Aorta (tissue), 5 donors: ENCODE measurements at regions of chr2 and their contacts with region 1.

Region 1: GRCh38 chr2:95314964-95315611 is 17.9 kb downstream of the KCNIP3 start:
- DNase-seq: peak in 1 of 2 donors; percentile 30
- ATAC-seq: no peak
- H3K4me3 ChIP-seq: no peak overlapping the region
- H3K27ac ChIP-seq: no peak overlapping the region
- H3K4me1 ChIP-seq: no peaks in the 10 kb centered on the region
- H3K27me3 ChIP-seq: no peaks in the 10 kb centered on the region

Region 2: GRCh38 chr2:95185197-95185596 is 129.9 kb before region 1 on chr2:
- intact Hi-C with region 1: loop called in 1 of 2 experiments (anchors 10 kb)
- DNase-seq: no peak
- ATAC-seq: no peak
- H3K4me3 ChIP-seq: no peak overlapping the region
- H3K27ac ChIP-seq: no peak overlapping the region
- H3K4me1 ChIP-seq: no peaks in the 10 kb centered on the region
- H3K27me3 ChIP-seq: no peaks in the 10 kb centered on the region